T-cell (primary cell): ENCODE measurements at regions of chr19 and their contacts with region 1.

Region 1: DNA sequence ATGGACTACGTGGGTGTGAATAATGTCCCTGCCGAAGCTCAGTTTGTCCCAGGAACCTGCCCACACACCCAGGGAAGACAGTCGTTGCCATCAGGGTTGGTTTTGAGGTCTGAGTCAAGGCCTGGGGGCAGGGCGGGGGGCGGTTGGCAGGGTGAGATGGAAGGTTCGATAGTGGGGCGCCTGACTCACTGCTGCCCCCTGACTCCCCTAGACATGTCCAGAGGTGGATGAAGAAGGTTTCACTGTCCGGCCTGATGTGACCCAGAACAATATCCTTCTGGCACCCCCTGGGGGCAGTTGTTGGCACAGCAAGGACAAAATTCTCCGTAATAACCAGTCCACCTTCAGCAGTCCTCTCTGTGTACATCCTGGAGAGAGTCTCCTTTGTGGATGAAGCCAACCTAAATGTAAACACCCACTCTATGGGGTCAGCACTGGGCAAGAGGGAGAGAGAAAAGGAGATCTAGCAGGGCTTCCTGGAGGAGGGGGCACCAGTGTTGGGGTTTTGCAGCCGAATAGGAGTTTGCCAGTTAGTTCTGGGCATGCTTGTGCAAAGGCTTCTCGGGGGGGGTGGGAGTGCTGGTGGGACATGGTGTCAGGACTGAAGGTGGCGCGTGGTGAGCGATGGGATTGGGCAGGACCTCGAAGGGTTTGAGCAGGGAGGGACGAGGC is 19.6 kb upstream of the B3GNT3 start:
- DNase-seq: peak in 9 of 35 experiments; percentile 18 to 50 (median 29)
- ATAC-seq: no peak
- H3K4me3 ChIP-seq: no peak overlapping the region
- H3K4me3 Mint-ChIP-seq: no peak overlapping the region
- H3K27ac ChIP-seq: no peak overlapping the region
- H3K27ac Mint-ChIP-seq: peak overlapping the region; percentile 12 to 15
- H3K4me1 ChIP-seq: peaks cover 0 to 10% of the 10 kb centered on the region in 2 experiments
- H3K4me1 Mint-ChIP-seq: peaks cover 0 to 16% (median 12%) of the 10 kb centered on the region in 3 donors
- H3K27me3 ChIP-seq: no peaks in the 10 kb centered on the region
- H3K27me3 Mint-ChIP-seq: no peaks in the 10 kb centered on the region

Region 2: GRCh38 chr19:17539238-17540117 is 235.9 kb before region 1 on chr19:
- CTCF ChIA-PET with region 1: no interaction called
- POLR2A ChIA-PET with region 1: no interaction called
- DNase-seq: peak; percentile 82 to 100 (median 98)
- ATAC-seq: peak; percentile 91 to 94 (median 92)
- H3K4me3 ChIP-seq: peak overlapping the region; percentile 25 to 57
- H3K4me3 Mint-ChIP-seq: peak overlapping the region; percentile 82 to 88 (median 84)
- H3K27ac ChIP-seq: peak overlapping the region; percentile 18
- H3K27ac Mint-ChIP-seq: peak overlapping the region; percentile 73 to 82
- H3K4me1 ChIP-seq: peaks cover 4 to 17% of the 10 kb centered on the region in 2 experiments
- H3K4me1 Mint-ChIP-seq: peaks cover 11 to 18% (median 18%) of the 10 kb centered on the region in 3 donors
- H3K27me3 ChIP-seq: peaks cover 0 to 2% of the 10 kb centered on the region in 2 experiments
- H3K27me3 Mint-ChIP-seq: no peaks in the 10 kb centered on the region

Region 3: DNA sequence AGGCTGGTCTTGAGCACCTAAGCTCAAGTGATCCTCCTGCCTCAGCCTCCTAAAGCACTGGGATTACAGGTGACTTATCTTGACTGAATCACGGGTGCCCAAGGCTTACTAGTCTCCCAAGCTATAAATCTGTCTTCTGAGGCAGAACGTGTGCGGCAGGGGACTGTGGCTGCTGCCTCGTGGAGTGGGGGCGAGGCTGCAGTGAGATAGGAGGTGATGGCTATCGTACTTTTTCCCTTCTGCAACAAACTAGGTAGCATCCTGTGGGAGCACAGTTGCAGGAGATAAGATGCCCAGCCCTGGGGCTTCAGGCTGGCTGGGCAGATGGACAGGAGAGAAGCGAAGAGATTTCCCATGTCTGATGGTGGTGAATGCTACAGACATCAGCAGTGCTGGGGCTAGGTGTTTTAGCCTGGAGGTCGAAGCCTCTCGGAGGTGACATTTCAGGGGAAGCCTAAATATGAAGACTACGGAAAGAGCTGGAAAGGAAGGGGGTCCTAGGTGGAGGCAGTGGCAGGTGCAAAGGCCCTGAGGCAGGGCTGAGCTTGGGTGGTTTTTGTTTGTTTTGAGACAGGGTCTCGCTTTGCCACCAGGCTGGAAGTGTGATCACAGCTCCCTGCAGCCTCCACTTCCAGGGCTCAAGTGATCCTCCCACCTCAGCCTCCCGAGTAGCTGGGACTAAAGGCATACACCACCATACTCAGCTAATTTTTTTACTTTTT is 26.9 kb after region 1 on chr19:
- CTCF ChIA-PET with region 1: no interaction called
- POLR2A ChIA-PET with region 1: interaction called in 1 of 2 experiments, 12 read pairs
- DNase-seq: no peak
- ATAC-seq: no peak
- H3K4me3 ChIP-seq: no peak overlapping the region
- H3K4me3 Mint-ChIP-seq: peak overlapping the region in 1 of 3 donors; percentile 83
- H3K27ac ChIP-seq: no peak overlapping the region
- H3K27ac Mint-ChIP-seq: peak overlapping the region; percentile 85 to 86
- H3K4me1 ChIP-seq: peaks cover 21 to 33% of the 10 kb centered on the region in 2 experiments
- H3K4me1 Mint-ChIP-seq: peaks cover 36 to 47% (median 47%) of the 10 kb centered on the region in 3 donors
- H3K27me3 ChIP-seq: peaks cover 0 to 3% of the 10 kb centered on the region in 2 experiments
- H3K27me3 Mint-ChIP-seq: no peaks in the 10 kb centered on the region

Region 4: DNA sequence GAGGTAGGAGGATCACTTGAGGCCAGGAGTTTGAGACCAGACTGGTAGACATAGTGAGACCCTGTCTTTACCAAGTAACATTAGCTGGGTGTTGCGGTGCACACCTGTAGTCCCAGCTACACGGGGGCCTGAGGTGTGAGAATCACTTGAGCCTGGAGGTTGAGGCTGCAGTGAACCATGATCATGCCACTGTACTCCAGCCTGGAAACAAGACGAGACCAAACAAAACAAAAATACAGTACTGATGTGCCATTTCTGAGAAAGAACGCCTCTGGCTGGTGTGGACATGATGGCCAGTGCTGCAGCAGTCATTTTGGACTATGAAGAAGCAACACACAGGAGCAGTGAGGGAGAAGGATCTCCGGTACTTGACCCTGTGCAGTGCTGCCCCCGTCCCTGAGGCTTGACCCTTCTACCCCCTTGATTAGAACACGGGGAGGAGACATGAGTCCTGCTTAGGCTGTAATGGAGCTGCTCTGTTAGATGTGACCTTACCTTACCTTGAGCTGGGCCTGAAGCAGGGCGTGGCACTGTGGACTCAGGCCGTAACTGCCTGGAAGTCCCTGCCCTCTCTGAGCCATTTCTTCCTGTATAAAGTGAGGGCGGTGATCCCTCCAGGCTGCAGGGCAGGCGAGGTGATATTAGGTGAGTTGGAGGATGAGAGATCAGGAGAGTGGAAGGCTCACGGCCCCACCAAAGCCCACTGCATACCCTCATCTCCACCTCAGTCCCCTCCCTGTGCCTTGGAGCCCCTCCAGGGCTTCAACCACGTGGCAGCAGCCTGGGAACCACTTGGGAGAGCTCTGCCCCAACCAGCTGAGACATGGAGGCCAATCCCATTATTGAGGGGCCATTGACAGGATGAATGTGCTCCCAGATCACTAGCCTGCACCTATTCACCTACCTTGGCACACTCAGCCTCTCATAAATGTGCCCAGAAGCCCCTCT is 90.3 kb after region 1 on chr19:
- CTCF ChIA-PET with region 1: no interaction called
- POLR2A ChIA-PET with region 1: no interaction called
- DNase-seq: no peak
- ATAC-seq: no peak
- H3K4me3 ChIP-seq: no peak overlapping the region
- H3K4me3 Mint-ChIP-seq: no peak overlapping the region
- H3K27ac ChIP-seq: no peak overlapping the region
- H3K27ac Mint-ChIP-seq: peak overlapping the region; percentile 5 to 46
- H3K4me1 ChIP-seq: peaks cover 5 to 22% of the 10 kb centered on the region in 2 experiments
- H3K4me1 Mint-ChIP-seq: peaks cover 14 to 26% (median 16%) of the 10 kb centered on the region in 3 donors
- H3K27me3 ChIP-seq: peaks cover 0 to 7% of the 10 kb centered on the region in 2 experiments
- H3K27me3 Mint-ChIP-seq: no peaks in the 10 kb centered on the region

Region 5: DNA sequence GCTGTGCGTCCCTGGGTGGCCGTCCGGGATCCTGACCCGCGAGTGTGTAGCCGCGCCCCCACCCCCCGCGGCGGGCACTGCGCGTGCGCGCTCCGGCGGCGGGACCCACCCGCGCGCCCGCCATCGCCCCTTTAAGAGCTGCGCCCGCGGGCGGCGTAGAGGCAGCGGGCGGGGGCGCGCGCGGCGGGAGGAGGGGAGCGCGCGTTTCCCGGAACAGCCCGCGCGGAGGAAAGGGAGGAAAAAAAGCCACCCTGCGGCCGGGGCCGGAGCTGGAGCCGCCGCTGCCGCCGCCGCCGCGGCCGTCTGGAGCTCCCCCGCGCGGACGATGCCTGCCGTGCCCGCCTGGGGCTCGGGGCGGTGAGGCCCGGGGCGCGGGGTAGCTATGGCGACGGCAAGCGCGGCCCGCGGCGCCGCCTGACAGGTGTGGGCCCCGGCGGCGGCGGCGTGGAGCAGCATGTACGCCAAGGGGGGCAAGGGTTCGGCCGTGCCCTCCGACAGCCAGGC is 643.9 kb after region 1 on chr19 and contains the start of gene SSBP4:
- CTCF ChIA-PET with region 1: no interaction called
- POLR2A ChIA-PET with region 1: no interaction called
- DNase-seq: peak in 34 of 35 experiments; percentile 43 to 83 (median 60)
- ATAC-seq: peak; percentile 63 to 69 (median 65)
- H3K4me3 ChIP-seq: peak within 1 kb of the TSS; percentile 55 to 77
- H3K4me3 Mint-ChIP-seq: peak within 1 kb of the TSS; percentile 83 to 92 (median 89)
- H3K27ac ChIP-seq: peak within 1 kb of the TSS; percentile 68
- H3K27ac Mint-ChIP-seq: peak within 1 kb of the TSS; percentile 90 to 95
- H3K4me1 ChIP-seq: peaks cover 47 to 94% of the 10 kb centered on the region in 2 experiments
- H3K4me1 Mint-ChIP-seq: peaks cover 72 to 85% (median 84%) of the 10 kb centered on the region in 3 donors
- H3K27me3 ChIP-seq: peaks cover 0 to 44% of the 10 kb centered on the region in 2 experiments
- H3K27me3 Mint-ChIP-seq: peaks cover 17 to 20% of the 10 kb centered on the region in 2 donors
- total RNA-seq, gene SSBP4: 71.3 to 127 (median 102) TPM